ENCODE measurements at regions of chr6 and their contacts with region 1.

Region 1: DNA sequence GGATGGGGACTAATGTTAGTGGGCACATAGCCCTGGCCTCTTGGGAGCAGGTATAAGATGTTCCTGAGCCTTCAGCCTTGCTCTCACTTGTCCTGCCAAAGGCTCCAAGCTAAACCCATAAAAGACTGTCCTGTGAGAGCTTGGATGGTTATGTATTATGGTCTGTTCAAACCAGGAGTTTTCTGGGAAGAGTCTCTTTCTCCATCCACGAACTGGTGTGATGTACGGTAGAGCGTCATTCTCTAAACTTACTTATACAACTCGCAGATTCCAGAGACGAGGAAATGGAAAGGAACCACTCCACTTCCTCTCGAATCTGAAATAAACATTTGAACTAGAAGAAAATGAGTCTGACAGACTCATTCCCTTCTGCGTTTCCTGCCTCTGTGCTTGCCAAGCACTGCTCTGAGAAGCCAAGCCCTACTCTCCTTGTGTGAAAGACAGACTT is 5.3 kb downstream of the SOBP start:
- DNase-seq: no peak
- ATAC-seq: no peak
- H3K4me3 ChIP-seq: peak overlapping the region in 2 of 3 experiments; percentile 11 to 94; a peak in 1 of 6 replicates
- H3K27ac ChIP-seq: peak overlapping the region; percentile 82
- H3K4me1 ChIP-seq: peaks cover 63% of the 10 kb centered on the region
- H3K27me3 ChIP-seq: no peaks in the 10 kb centered on the region
- CTCF ChIP-seq: no peak
- EP300 ChIP-seq: no peak
- POLR2A ChIP-seq: no peak
- RAD21 ChIP-seq: no peak

Region 2: GRCh38 chr6:107532706-107533105 is 37.5 kb after region 1 on chr6:
- CTCF ChIA-PET with region 1: no interaction called
- POLR2A ChIA-PET with region 1: no interaction called
- in situ Hi-C with region 1: loop called (anchors 5 kb)
- intact Hi-C with region 1: no loop called
- DNase-seq: no peak
- ATAC-seq: no peak
- H3K4me3 ChIP-seq: no peak overlapping the region
- H3K27ac ChIP-seq: no peak overlapping the region
- H3K4me1 ChIP-seq: no peaks in the 10 kb centered on the region
- H3K27me3 ChIP-seq: no peaks in the 10 kb centered on the region
- CTCF ChIP-seq: no peak
- EP300 ChIP-seq: no peak
- POLR2A ChIP-seq: no peak
- RAD21 ChIP-seq: no peak